Ovary (tissue), 10 donors: ENCODE measurements at regions of chr18 and their contacts with region 1.

Region 1: GRCh38 chr18:11899063-11899462 is 9.1 kb downstream of the MPPE1 start:
- DNase-seq: no peak
- H3K4me3 ChIP-seq: no peak overlapping the region
- H3K27ac ChIP-seq: no peak overlapping the region
- H3K4me1 ChIP-seq: no peaks in the 10 kb centered on the region
- H3K27me3 ChIP-seq: no peaks in the 10 kb centered on the region
- CTCF ChIP-seq: no peak
- EP300 ChIP-seq: no peak
- POLR2A ChIP-seq: no peak

Region 2: GRCh38 chr18:11857177-11857887 is 41.7 kb before region 1 on chr18:
- intact Hi-C with region 1: loop called in 1 of 4 experiments (anchors 5 kb)
- DNase-seq: peak; percentile 23 to 59 (median 42)
- H3K4me3 ChIP-seq: no peak overlapping the region
- H3K27ac ChIP-seq: peak overlapping the region in 1 of 2 donors; percentile 52
- H3K4me1 ChIP-seq: peaks cover 2% of the 10 kb centered on the region
- H3K27me3 ChIP-seq: no peaks in the 10 kb centered on the region
- CTCF ChIP-seq: no peak
- EP300 ChIP-seq: no peak
- POLR2A ChIP-seq: no peak

Region 3: DNA sequence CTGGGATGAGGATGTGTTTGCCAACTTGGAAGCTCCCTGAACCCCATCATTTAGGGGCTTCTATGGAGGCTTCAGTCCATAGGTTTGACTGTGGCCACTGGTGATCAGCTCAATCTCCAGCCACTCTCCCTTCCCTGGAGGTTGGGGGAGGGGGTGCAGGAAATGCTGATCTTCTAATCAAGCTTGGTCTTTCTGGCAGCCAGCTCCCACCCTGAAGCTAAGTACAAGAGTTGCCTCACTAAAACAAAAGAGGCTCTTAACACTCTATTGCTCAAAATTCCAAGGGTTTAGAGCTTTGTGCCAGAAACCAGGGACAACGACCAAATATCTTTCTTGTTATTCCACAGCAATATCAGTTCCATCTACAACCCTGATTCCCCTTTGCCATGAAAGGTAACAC is 28.4 kb after region 1 on chr18:
- intact Hi-C with region 1: no loop called
- DNase-seq: no peak
- H3K4me3 ChIP-seq: no peak overlapping the region
- H3K27ac ChIP-seq: no peak overlapping the region
- H3K4me1 ChIP-seq: no peaks in the 10 kb centered on the region
- H3K27me3 ChIP-seq: no peaks in the 10 kb centered on the region
- CTCF ChIP-seq: no peak
- EP300 ChIP-seq: no peak
- POLR2A ChIP-seq: no peak